B cell (primary cell): ENCODE measurements at regions of chr16 and their contacts with region 1.

Region 1: DNA sequence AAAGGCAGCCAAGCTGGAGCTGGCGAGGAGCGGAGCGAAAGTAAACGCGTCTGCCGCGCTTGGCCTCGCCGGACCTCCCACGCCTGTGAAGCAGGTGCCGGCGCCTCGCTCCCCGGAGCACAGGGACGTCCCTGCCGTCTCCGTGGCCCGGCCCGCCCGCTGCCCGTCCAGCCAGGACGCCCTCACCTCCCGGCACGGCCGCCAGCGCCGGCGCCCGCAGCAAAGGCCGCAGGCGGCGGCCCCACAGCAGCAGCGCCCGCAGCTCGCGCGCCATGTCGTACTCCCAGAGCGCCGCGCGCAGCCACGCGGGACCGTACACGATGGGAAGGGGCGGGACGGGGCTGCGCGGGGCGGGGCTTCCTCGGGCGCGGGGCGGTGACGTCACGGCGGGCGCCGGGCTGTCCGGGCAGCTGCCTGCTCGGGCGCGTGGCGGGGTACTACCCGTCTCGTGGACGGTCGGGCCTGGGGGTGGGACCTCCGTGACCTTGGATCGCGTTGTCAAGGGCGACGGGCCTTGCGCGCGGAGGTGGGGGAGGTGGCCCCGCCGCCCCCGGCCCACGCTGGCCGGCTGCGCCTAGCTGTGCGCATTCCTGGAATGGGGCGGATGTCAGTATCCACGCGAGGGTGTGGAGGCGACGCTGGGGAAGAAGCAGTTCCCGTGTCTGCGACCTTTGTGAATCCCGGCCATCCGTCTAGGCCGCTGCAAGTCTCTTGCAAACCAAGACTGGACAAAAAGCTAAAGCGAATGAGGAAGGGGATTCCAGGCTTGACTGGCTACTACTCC is at the start of gene TRAP1:
- DNase-seq: peak; percentile 93
- ATAC-seq: peak; percentile 97
- H3K4me3 ChIP-seq: peak within 1 kb of the TSS; percentile 58 to 98 (median 90)
- H3K4me3 Mint-ChIP-seq: peak within 1 kb of the TSS; percentile 91
- H3K27ac ChIP-seq: peak within 1 kb of the TSS; percentile 69 to 91
- H3K27ac Mint-ChIP-seq: peak within 1 kb of the TSS; percentile 87
- H3K4me1 ChIP-seq: peaks cover 11 to 14% of the 10 kb centered on the region in 2 donors
- H3K4me1 Mint-ChIP-seq: peaks cover 15% of the 10 kb centered on the region
- H3K27me3 ChIP-seq: no peaks in the 10 kb centered on the region
- H3K27me3 Mint-ChIP-seq: no peaks in the 10 kb centered on the region
- CTCF ChIP-seq: no peak
- total RNA-seq, gene TRAP1: 51.1 and 54.4 TPM in 2 replicates

Region 2: GRCh38 chr16:3690470-3690928 is 26.9 kb before region 1 on chr16:
- CTCF ChIA-PET with region 1: interaction called, 5 read pairs
- POLR2A ChIA-PET with region 1: no interaction called
- intact Hi-C with region 1: loop called (anchors 2 kb)
- DNase-seq: peak; percentile 86
- ATAC-seq: peak; percentile 98
- H3K4me3 ChIP-seq: no peak overlapping the region
- H3K4me3 Mint-ChIP-seq: no peak overlapping the region
- H3K27ac ChIP-seq: no peak overlapping the region
- H3K27ac Mint-ChIP-seq: peak overlapping the region; percentile 50
- H3K4me1 ChIP-seq: peaks cover 3 to 9% of the 10 kb centered on the region in 2 donors
- H3K4me1 Mint-ChIP-seq: peaks cover 7% of the 10 kb centered on the region
- H3K27me3 ChIP-seq: no peaks in the 10 kb centered on the region
- H3K27me3 Mint-ChIP-seq: no peaks in the 10 kb centered on the region
- CTCF ChIP-seq: peak; percentile 96

Region 3: GRCh38 chr16:4416200-4417032 is 699.0 kb after region 1 on chr16 and contains the start of gene CORO7:
- CTCF ChIA-PET with region 1: no interaction called
- POLR2A ChIA-PET with region 1: no interaction called
- intact Hi-C with region 1: loop called (anchors 5 kb)
- DNase-seq: peak; percentile 99
- ATAC-seq: peak; percentile 90
- H3K4me3 ChIP-seq: peak within 1 kb of the TSS; percentile 62 to 94 (median 78)
- H3K4me3 Mint-ChIP-seq: peak within 1 kb of the TSS; percentile 96
- H3K27ac ChIP-seq: peak within 1 kb of the TSS; percentile 91 to 95
- H3K27ac Mint-ChIP-seq: peak within 1 kb of the TSS; percentile 95
- H3K4me1 ChIP-seq: peaks cover 24 to 35% of the 10 kb centered on the region in 2 donors
- H3K4me1 Mint-ChIP-seq: peaks cover 31% of the 10 kb centered on the region
- H3K27me3 ChIP-seq: no peaks in the 10 kb centered on the region
- H3K27me3 Mint-ChIP-seq: no peaks in the 10 kb centered on the region
- CTCF ChIP-seq: no peak
- total RNA-seq, gene CORO7: 114 and 117 TPM in 2 replicates